Heart left ventricle (tissue), 16 donors: ENCODE measurements at regions of chr17 and their contacts with region 1.

Region 1: DNA sequence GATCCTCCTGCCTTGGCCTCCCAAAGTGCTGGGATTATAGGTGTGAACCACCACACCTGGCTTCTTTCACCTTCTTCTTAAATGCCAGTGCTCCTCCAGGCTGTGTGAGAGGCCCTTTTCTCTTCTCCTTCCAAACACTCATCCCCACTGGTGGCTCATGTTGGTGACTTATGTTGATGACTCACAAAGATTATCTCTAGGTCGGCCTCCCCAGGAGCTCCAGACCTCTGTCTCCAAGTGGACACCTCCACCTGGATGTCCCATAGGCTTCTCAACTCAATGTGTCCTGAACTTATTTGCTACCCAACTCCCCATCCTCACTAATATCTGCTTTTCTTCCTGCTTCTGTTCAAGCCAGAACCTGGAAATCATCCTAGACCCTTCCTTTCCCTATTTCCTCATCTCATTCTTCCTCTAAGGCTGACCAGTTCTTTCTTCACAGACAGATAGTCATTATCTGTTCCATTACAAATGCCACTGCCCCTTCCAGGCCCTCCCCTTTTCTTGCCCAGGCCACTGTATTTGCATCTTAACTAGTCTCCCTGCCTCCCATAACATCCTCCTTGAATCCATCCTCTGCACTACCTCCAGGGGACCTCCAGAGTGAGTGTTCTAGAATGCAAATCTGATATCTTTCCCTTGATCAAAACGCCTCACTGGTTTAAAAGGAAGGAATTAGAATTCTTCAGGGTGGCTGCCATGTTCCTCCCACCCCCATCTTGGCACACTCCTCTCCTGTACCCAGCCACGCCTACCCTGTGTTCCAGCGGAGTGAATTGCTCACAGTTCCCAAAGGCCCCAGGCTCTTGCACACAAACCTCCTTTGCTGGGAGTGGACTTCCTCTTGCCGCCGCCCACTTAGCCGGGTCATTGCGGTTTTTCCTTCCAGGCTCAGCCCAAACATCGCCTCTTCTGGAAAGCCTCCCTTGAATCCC is 34.8 kb upstream of the FBXO47 start:
- DNase-seq: peak; percentile 85 to 93 (median 90)
- ATAC-seq: peak; percentile 91 to 96 (median 94)
- H3K4me3 ChIP-seq: peak overlapping the region in 9 of 12 donors; percentile 20 to 51 (median 30)
- H3K27ac ChIP-seq: peak overlapping the region; percentile 84 to 98 (median 94)
- H3K4me1 ChIP-seq: peaks cover 0 to 41% (median 21%) of the 10 kb centered on the region in 12 donors
- H3K27me3 ChIP-seq: no peaks in the 10 kb centered on the region
- CTCF ChIP-seq: peak in 1 of 12 donors; percentile 12
- POLR2A ChIP-seq: no peak

Region 2: DNA sequence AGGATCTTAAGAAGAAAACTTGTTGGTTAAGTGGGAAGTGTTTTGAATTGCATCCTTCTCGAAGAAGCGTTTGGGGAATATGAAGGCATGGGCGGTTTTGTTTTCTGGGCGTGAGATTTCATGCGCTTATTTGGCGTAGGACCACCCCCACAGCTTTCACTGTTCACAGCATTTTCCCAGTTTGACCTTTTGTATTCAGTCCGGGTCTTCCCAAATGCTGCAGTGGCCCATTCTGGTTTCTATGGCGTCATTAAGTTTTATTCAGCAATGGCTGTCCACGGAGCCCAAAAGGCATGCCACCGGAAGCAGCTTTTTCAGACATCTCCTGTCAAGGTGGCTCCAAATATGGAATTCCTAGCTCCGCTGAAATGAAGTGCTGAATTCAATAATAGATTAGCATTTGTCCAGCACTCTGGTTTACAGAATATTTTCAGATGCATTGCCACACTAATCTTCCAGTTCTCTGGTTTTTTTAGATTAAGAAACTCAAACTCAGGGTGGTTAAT is 55.8 kb after region 1 on chr17:
- intact Hi-C with region 1: loop called in 4 of 10 experiments (anchors 5 to 10 kb)
- DNase-seq: no peak
- ATAC-seq: no peak
- H3K4me3 ChIP-seq: peak overlapping the region in 11 of 12 donors; percentile 31 to 71 (median 63)
- H3K27ac ChIP-seq: peak overlapping the region in 4 of 12 donors; percentile 41 to 77 (median 68)
- H3K4me1 ChIP-seq: peaks cover 0 to 35% (median 6%) of the 10 kb centered on the region in 12 donors
- H3K27me3 ChIP-seq: no peaks in the 10 kb centered on the region
- CTCF ChIP-seq: no peak
- POLR2A ChIP-seq: no peak

Region 3: GRCh38 chr17:39069114-39069756 is 67.3 kb after region 1 on chr17:
- intact Hi-C with region 1: no loop called
- DNase-seq: no peak
- ATAC-seq: peak; percentile 36 to 65 (median 62)
- H3K4me3 ChIP-seq: no peak overlapping the region
- H3K27ac ChIP-seq: no peak overlapping the region
- H3K4me1 ChIP-seq: peaks cover 0 to 7% (median 0%) of the 10 kb centered on the region in 12 donors
- H3K27me3 ChIP-seq: no peaks in the 10 kb centered on the region
- CTCF ChIP-seq: peak; percentile 44 to 68 (median 54)
- POLR2A ChIP-seq: no peak

Region 4: DNA sequence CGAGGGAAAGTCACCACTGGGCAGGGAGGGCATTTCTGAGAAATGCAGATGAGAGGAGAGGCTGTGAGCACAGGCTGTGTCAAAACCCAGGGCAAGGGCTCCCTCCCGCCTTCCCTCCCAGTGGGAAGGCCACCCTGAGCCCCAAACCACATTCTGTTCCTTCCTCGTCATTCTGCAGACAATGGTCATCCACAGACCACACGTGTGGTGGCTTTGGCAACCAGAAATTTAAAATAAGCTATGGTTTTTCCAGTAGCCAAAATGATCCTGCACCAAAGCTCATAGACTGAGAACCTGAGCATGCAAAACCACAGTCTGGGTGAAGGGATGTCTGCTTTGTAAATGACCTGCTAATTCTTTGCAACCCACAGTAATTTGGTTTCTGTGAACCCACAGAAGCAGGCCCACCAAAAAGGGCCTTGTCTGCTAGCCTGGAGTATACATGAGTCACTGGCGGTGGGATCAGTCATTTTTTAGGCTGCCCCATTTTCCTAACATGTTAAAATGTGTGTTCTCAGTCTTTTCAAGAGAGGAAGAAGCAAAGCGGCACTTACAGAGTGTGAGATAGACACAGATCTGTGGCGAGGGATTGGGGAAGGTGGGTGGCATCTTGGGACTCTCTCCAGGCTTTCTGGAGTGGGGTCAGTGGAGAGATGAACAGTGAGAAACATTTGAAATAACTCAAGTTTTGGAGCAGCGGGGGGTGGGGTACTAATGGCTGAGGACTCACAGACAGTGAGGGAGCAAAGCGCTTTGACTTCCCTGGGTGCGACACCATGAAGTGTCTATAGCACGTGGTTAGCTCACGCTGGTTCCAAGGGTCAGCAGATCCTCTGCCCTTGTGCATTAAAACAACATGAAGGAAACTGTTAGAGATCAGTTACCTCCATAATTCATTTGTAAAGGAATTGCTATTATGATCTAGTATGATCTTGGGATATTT is 756.2 kb after region 1 on chr17:
- intact Hi-C with region 1: no loop called
- DNase-seq: no peak
- ATAC-seq: no peak
- H3K4me3 ChIP-seq: no peak overlapping the region
- H3K27ac ChIP-seq: peak overlapping the region in 1 of 12 donors; percentile 98
- H3K4me1 ChIP-seq: peaks cover 0 to 38% (median 14%) of the 10 kb centered on the region in 12 donors
- H3K27me3 ChIP-seq: peaks cover 0 to 19% (median under 1%) of the 10 kb centered on the region in 9 donors
- CTCF ChIP-seq: no peak
- POLR2A ChIP-seq: no peak